ENCODE measurements at regions of chr1 and their contacts with region 1.

Region 1: GRCh38 chr1:171141688-171142415 is 43.2 kb upstream of the FMO2 start:
- DNase-seq: peak; percentile 100
- H3K4me3 ChIP-seq: no peak overlapping the region
- H3K27me3 ChIP-seq: no peaks in the 10 kb centered on the region
- CTCF ChIP-seq: peak; percentile 54

Region 2: GRCh38 chr1:170967042-170967910 is 174.6 kb before region 1 on chr1:
- CTCF ChIA-PET with region 1: interaction called, 10 read pairs
- POLR2A ChIA-PET with region 1: no interaction called
- DNase-seq: peak; percentile 19
- H3K4me3 ChIP-seq: no peak overlapping the region
- H3K27me3 ChIP-seq: no peaks in the 10 kb centered on the region
- CTCF ChIP-seq: peak; percentile 72

Region 3: GRCh38 chr1:171191992-171192391 is 50.1 kb after region 1 on chr1:
- CTCF ChIA-PET with region 1: no interaction called
- POLR2A ChIA-PET with region 1: no interaction called
- DNase-seq: no peak
- H3K4me3 ChIP-seq: no peak overlapping the region
- H3K27me3 ChIP-seq: no peaks in the 10 kb centered on the region
- CTCF ChIP-seq: no peak